Posterior vena cava (tissue), 2 donors: ENCODE measurements at regions of chr13 and their contacts with region 1.

Region 1: DNA sequence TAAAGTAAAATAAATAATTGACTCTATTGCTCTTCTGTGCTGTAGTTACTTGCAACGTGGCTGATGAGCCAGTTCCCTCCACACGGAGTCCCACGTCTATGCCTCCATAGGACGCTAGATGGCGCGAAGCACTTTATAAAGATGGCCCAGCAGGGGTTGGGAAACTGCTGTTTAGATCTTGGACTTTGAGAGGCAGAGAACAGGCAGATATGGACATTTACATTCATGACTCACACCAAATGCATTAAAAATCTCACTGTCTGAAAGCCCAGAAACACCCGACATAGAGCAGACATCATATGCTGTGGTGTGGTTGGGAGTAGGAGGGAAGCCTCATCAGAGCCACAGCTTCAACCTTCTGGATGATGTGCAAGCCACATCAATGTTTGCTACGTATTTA is 643.1 kb upstream of the ARGLU1 start:
- DNase-seq: peak; percentile 85

Region 2: DNA sequence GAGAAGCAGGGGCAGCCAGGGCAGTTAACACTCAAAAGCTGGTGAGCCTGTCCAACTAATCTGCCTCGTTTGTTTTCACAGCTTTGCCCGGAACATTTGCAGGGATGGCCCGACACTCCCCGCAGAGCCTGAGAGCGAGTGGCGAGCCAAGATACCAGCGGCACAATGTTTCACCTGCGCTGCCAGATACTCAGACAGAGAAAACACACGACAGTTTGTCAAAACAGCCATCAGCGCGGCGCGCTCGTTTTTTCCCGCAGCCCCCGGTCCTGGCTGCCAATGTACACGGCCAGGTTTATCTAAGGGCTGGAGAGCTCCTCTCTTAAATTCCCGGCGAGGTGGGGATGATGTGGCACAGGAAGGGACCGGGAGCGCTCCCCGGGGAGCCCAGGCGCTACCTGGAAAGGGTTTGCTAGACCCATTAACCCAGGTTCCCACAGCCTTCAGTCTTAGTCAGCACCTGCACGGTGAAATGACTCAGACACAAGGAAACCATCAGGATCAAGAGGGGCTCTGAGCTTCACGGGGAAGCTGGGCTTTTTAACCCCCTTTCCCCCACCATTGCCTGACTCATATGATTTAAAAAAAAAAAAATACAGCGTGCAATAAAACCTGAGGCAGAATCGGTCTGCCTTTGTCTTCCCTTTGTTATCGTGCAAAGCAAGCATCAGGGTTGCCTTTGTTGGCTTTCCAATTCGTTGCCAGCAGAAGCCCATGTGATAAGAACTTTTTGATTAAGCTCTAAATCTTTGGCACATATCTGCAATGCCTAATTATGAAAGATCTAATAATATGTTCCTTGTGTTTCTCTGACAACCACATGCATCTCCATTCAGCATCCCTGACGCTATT is 861.8 kb before region 1 on chr13:
- intact Hi-C with region 1: no loop called
- DNase-seq: no peak

Region 3: DNA sequence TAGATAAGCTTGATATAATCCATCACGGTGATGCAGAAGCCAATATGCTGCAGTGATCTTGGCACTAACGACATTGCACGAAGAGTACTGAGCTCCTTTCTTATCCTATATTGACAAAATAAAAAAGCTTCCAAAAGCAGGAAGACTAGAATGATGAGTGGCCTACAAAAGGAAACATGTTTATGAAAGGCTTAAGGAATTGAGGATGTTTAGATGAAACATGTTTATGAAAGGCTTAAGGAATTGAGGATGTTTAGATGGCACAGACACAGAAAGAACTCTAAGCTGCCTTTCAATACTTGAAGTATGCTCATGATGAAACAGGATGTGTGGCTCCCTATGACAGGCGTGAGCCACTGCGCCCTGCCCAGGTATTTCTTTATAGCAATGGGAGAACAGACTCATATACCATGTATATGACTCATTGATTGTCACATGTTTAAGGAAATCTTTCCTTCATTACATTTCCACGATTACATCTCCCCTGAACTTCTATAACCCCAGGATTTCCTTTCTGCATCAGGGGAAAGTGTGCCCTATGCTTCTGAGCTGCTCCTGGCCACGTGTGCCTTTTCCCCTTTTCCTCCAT is 47.6 kb after region 1 on chr13:
- intact Hi-C with region 1: no loop called
- DNase-seq: no peak

Region 4: GRCh38 chr13:107650081-107650701 is 439.1 kb after region 1 on chr13:
- intact Hi-C with region 1: loop called in 1 of 2 experiments (anchors 10 kb)
- DNase-seq: peak; percentile 81

Region 5: DNA sequence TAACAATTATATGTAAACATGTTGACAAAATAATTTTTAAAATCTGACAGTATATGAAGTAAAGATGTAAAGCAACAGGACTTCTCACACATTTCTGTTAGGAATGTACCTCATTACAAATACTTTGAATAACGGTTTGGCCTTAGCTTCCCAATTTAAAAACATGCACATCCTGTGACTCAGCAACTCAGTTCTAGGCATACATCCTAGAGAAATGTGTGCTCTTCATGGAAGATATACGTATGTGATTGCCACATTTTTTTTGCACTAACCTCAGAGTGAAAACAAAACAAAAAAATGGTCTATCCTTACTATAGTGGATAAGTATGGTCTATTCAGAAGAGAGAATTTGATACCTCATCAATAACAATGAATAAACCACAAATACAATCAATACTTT is 689.7 kb after region 1 on chr13:
- intact Hi-C with region 1: no loop called
- DNase-seq: no peak

Region 6: DNA sequence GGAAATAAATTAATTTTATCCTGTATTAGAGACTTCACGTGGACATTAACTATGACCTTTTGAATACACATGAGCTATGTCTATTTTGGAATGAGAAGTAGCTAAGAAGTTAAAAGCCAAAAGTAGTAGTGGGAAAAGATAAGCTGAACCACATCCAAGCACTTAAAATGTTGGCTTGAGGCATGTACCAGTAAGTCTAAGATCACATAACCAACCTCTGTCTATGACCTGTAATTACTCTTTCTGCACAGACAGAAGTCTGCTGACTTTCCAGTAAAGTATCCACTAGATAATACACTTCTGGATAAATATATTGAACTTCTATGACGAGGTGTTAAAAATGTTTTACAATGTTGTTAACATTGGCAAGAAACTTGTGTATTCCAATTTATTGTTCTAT is 935.6 kb after region 1 on chr13:
- intact Hi-C with region 1: loop called (anchors 10 kb)
- DNase-seq: no peak